ENCODE measurements at regions of chr2 and their contacts with region 1.

Region 1: DNA sequence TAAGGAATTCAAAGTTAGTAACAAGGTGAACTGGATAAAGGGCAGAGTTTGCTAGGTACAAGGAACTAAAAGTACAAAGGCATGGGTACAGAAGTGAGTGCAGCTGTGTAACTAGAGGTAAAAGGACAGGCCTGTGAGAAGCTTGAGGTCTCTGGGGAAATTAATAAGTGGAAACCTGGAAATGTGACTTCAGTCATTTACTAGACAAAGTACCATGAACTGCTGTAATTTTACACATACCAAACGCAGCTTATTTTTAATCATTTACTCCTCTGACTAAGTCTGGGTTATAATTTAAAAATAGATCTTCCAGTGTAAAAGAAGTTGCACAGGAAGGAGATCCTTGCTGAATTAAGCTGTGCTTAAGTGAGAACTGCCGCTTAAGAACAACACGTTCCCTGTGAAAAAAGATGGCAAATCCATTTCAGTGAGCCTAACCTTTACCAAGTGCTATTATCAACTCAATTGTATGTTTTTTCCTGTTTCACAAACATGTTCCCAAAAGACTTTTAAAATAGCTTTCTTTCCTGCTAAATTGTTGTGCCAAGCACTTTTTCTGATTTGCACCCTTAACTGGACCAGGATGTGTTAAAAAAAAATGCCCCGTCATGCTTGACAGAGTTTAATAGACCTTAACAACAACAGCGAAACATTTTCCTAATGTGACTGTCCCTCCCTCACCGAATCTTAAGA is 44.3 kb downstream of the CALCRL start:
- DNase-seq: peak in 1 of 2 donors; percentile 29
- ATAC-seq: peak; percentile 75 to 92 (median 88)
- H3K4me3 ChIP-seq: peak overlapping the region in 6 of 10 donors; percentile 12 to 40 (median 32)
- H3K27ac ChIP-seq: peak overlapping the region; percentile 22 to 71 (median 62)
- H3K4me1 ChIP-seq: peaks cover 0 to 81% (median 21%) of the 10 kb centered on the region in 9 donors
- H3K27me3 ChIP-seq: no peaks in the 10 kb centered on the region
- CTCF ChIP-seq: no peak

Region 2: DNA sequence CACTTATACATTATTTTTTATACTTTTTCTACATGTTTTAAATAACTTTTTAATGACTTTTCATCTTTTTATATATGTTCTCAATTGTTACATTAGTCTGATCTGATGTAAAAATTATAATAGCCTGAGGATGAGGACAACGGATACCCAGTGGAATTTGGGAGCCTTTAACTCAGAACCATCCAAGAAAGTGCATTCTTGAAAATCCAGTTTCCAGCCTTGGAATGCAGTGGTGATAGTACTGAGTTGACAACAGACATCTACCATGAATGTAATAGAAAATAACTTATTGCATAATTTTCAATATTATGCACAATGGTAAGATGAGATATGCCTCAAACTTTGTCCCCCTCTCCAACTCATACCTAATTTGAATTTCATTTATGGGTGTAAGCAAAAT is 1038.3 kb before region 1 on chr2:
- intact Hi-C with region 1: no loop called
- DNase-seq: no peak
- ATAC-seq: no peak
- H3K4me3 ChIP-seq: no peak overlapping the region
- H3K27ac ChIP-seq: no peak overlapping the region
- H3K4me1 ChIP-seq: no peaks in the 10 kb centered on the region
- H3K27me3 ChIP-seq: no peaks in the 10 kb centered on the region
- CTCF ChIP-seq: no peak

Region 3: DNA sequence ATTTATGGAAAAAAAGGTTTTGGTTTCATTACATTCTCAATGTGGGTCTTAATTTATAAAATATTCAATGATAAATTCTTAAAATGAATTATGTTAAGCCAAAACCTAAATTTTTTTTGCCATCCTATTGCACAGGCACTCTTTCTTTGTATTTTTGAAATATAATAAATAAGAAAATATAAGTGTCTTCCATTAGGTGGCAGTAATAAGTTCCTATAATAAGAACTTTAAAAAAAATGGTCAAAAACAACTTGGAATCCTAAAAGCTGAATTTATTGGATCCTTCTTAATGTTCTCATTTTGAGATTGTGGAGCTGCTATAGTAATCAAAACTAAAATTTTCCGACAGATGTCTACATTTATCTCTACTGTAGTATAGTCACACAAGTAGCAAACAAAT is 38.7 kb after region 1 on chr2:
- intact Hi-C with region 1: loop called in 2 of 10 experiments (anchors 5 kb)
- DNase-seq: no peak
- ATAC-seq: no peak
- H3K4me3 ChIP-seq: peak overlapping the region in 5 of 10 donors; percentile 7 to 59 (median 58)
- H3K27ac ChIP-seq: peak overlapping the region in 2 of 10 donors; percentile 15 to 27
- H3K4me1 ChIP-seq: peaks cover 0 to 45% (median 13%) of the 10 kb centered on the region in 9 donors
- H3K27me3 ChIP-seq: no peaks in the 10 kb centered on the region
- CTCF ChIP-seq: peak in 3 of 9 donors; percentile 27 to 49 (median 30)

Region 4: GRCh38 chr2:188235364-188235763 is 831.6 kb after region 1 on chr2:
- intact Hi-C with region 1: no loop called
- DNase-seq: no peak
- ATAC-seq: no peak
- H3K4me3 ChIP-seq: no peak overlapping the region
- H3K27ac ChIP-seq: no peak overlapping the region
- H3K4me1 ChIP-seq: no peaks in the 10 kb centered on the region
- H3K27me3 ChIP-seq: no peaks in the 10 kb centered on the region
- CTCF ChIP-seq: no peak

Measured in heart right ventricle (tissue), 16 donors.